Dendritic cell treated with granulocyte-macrophage colony-stimulating factor and Interleukin-4, amounts not matched to agents 40 ng/mL and 50 ng/mL, for 4 days (primary cell): ENCODE measurements at regions of chr3 and their contacts with region 1.

Region 1: GRCh38 chr3:27484015-27484844 is at the start of gene SLC4A7:
- H3K4me3 Mint-ChIP-seq: peak within 1 kb of the TSS; percentile 95
- H3K27ac Mint-ChIP-seq: peak within 1 kb of the TSS; percentile 96
- H3K4me1 Mint-ChIP-seq: peaks cover 18% of the 10 kb centered on the region
- H3K27me3 Mint-ChIP-seq: no peaks in the 10 kb centered on the region

Region 2: GRCh38 chr3:27521179-27521871 is 37.1 kb after region 1 on chr3:
- intact Hi-C with region 1: loop called (anchors 1 kb)
- H3K4me3 Mint-ChIP-seq: no peak overlapping the region
- H3K27ac Mint-ChIP-seq: peak overlapping the region; percentile 31
- H3K4me1 Mint-ChIP-seq: peaks cover 32% of the 10 kb centered on the region
- H3K27me3 Mint-ChIP-seq: no peaks in the 10 kb centered on the region

Region 3: DNA sequence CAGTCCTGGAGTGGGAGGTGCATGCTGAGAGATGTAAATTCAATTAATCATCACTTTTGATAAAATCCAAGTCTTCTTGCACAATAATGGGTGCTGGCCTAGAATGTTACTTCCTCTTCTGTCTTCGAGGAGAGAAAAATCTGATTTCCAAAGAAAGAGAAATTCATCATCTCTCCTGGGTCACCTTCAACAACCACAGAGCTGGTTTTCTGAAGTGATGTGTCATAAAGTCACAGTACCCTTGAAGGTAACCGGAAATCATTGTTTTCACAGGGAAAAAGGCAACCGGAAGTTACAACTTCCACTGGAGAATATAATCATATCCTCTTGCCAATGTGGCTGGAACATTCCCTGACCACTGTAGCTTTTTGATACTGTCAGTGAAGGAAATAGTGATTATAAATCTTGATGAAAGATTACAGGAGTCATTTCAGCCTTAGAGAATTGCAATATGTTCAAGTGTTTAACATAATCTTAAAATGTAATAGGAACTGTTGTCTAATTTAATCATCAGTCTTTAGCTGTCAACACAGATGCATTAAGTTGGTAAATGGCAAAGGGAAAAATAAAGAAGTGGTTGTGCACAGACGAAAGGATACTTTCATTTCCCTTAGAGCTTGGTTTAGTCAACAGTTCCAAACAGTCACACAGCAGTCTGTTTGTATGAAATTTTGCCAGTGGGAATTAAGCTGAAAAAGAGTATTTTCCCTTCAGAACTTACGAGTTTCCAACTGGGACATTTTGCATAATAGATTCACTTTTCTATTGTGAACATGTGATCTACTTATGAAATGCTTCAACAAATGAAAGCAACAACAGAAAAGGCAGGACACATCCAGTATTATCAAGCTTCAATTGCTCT is 106.4 kb after region 1 on chr3:
- intact Hi-C with region 1: loop called (anchors 2 kb)
- H3K4me3 Mint-ChIP-seq: peak overlapping the region; percentile 18
- H3K27ac Mint-ChIP-seq: peak overlapping the region; percentile 92
- H3K4me1 Mint-ChIP-seq: peaks cover 45% of the 10 kb centered on the region
- H3K27me3 Mint-ChIP-seq: no peaks in the 10 kb centered on the region